B cell (primary cell): ENCODE measurements at regions of chr6 and their contacts with region 1.

Region 1: DNA sequence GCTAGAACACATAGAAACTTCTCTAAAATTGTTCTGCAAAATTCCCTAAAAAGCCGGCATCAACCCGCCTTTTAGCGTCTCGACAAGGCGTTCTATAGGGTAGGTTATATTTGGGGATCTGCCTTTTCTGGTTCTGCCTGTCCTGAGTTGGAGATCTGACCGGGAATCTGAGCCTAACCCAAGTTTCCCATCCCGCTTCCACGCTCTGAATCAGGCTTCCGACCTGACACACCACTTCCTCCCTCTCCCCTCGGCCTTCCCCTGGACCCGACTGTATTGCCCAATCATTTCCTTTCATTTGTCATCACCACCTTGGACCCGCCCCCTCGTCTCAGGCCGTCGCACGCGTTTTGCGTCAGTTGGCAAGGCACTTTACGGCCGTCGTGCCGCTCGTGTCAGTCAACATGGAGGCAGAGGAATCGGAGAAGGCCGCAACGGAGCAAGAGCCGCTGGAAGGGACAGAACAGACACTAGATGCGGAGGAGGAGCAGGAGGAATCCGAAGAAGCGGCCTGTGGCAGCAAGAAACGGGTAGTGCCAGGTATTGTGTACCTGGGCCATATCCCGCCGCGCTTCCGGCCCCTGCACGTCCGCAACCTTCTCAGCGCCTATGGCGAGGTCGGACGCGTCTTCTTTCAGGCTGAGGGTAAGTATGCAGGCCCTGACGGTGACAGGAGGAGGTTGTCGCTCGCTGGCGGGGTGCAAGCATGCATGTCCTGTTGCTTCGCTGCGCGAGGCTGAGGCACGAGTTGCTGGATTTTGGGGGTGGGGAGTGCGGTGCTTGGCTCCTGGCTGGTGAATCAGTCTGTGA is at the start of gene ABT1:
- DNase-seq: peak; percentile 98
- ATAC-seq: peak; percentile 93
- H3K4me3 ChIP-seq: peak within 1 kb of the TSS; percentile 84 to 99 (median 91)
- H3K4me3 Mint-ChIP-seq: no peak within 1 kb of the TSS
- H3K27ac ChIP-seq: peak within 1 kb of the TSS; percentile 88 to 89
- H3K27ac Mint-ChIP-seq: no peak within 1 kb of the TSS
- H3K4me1 ChIP-seq: peaks cover 14 to 24% of the 10 kb centered on the region in 2 donors
- H3K4me1 Mint-ChIP-seq: peaks cover 20% of the 10 kb centered on the region
- H3K27me3 ChIP-seq: peaks cover 2 to 20% (median 9%) of the 10 kb centered on the region in 4 experiments
- H3K27me3 Mint-ChIP-seq: peaks cover 8% of the 10 kb centered on the region
- CTCF ChIP-seq: no peak
- total RNA-seq, gene ABT1: 28.6 and 29.8 TPM in 2 replicates

Region 2: DNA sequence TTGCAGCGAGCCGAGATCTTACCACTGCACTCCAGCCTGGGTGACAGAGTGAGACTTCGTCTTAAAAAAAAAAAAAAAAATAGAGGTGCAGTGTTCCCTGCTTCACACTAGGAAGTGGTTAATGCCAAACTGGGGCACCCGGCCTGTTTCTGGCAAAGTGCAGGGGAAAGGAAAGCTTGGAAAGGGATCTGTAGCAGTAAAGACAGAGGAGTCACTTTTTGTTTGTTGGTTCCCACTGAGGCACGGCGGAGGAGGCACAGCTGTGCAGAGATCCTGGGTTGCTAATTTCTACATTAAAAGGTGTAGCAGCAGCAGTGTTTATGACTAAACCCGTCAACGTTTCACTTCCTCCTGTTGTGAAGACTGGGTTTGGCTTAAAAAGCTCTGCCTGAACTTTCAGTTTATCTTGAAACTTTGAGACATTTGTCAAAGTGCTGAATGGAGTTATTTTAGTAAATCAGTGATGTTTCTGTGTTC is 1192.1 kb before region 1 on chr6:
- CTCF ChIA-PET with region 1: no interaction called
- POLR2A ChIA-PET with region 1: no interaction called
- intact Hi-C with region 1: no loop called
- DNase-seq: peak; percentile 75
- ATAC-seq: peak; percentile 93
- H3K4me3 ChIP-seq: peak overlapping the region; percentile 32 to 70 (median 49)
- H3K4me3 Mint-ChIP-seq: no peak overlapping the region
- H3K27ac ChIP-seq: peak overlapping the region; percentile 70 to 71
- H3K27ac Mint-ChIP-seq: no peak overlapping the region
- H3K4me1 ChIP-seq: peaks cover 44 to 48% of the 10 kb centered on the region in 2 donors
- H3K4me1 Mint-ChIP-seq: peaks cover 18% of the 10 kb centered on the region
- H3K27me3 ChIP-seq: no peaks in the 10 kb centered on the region
- H3K27me3 Mint-ChIP-seq: no peaks in the 10 kb centered on the region
- CTCF ChIP-seq: no peak

Region 3: GRCh38 chr6:26136321-26136720 is 460.5 kb before region 1 on chr6:
- CTCF ChIA-PET with region 1: no interaction called
- POLR2A ChIA-PET with region 1: no interaction called
- intact Hi-C with region 1: no loop called
- DNase-seq: no peak
- ATAC-seq: no peak
- H3K4me3 ChIP-seq: no peak overlapping the region
- H3K4me3 Mint-ChIP-seq: no peak overlapping the region
- H3K27ac ChIP-seq: no peak overlapping the region
- H3K27ac Mint-ChIP-seq: peak overlapping the region; percentile 11
- H3K4me1 ChIP-seq: peaks cover 4 to 17% of the 10 kb centered on the region in 2 donors
- H3K4me1 Mint-ChIP-seq: peaks cover 42% of the 10 kb centered on the region
- H3K27me3 ChIP-seq: no peaks in the 10 kb centered on the region
- H3K27me3 Mint-ChIP-seq: no peaks in the 10 kb centered on the region
- CTCF ChIP-seq: no peak

Region 4: DNA sequence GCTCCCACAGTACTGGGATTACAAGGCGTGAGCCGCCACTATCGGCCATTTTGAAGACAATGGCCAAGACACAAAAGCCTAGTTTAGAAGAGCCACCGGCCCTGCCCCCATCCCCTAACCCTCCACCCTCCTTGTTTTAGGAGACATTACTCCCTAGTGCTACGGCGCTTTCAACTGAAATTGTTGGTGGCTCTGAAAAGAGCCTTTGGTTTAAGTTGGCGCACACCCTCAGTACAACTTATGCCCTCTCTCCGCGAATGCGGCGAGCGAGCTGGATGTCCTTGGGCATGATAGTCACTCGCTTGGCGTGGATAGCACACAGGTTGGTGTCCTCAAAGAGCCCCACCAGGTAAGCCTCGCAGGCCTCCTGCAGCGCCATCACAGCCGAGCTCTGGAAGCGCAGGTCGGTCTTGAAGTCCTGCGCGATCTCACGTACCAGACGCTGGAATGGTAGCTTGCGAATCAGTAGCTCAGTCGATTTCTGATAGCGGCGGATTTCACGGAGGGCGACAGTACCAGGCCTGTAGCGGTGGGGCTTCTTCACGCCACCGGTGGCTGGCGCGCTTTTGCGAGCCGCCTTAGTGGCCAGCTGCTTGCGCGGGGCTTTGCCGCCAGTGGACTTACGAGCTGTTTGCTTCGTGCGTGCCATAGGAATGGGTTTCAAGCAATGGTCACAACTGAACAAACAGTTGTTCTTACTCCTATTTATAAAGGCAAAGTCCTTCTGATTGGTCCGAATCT is 346.7 kb before region 1 on chr6:
- CTCF ChIA-PET with region 1: interaction called, 11 read pairs
- POLR2A ChIA-PET with region 1: no interaction called
- intact Hi-C with region 1: no loop called
- DNase-seq: peak; percentile 88
- ATAC-seq: peak; percentile 67
- H3K4me3 ChIP-seq: peak overlapping the region; percentile 68 to 90 (median 83)
- H3K4me3 Mint-ChIP-seq: peak overlapping the region; percentile 97
- H3K27ac ChIP-seq: peak overlapping the region; percentile 73 to 74
- H3K27ac Mint-ChIP-seq: peak overlapping the region; percentile 97
- H3K4me1 ChIP-seq: peaks cover 8 to 16% of the 10 kb centered on the region in 2 donors
- H3K4me1 Mint-ChIP-seq: peaks cover 43% of the 10 kb centered on the region
- H3K27me3 ChIP-seq: no peaks in the 10 kb centered on the region
- H3K27me3 Mint-ChIP-seq: no peaks in the 10 kb centered on the region
- CTCF ChIP-seq: peak; percentile 70

Region 5: GRCh38 chr6:26342106-26343004 is 254.4 kb before region 1 on chr6:
- CTCF ChIA-PET with region 1: interaction called, 30 read pairs
- POLR2A ChIA-PET with region 1: no interaction called
- intact Hi-C with region 1: loop called (anchors 1 kb)
- DNase-seq: no peak
- ATAC-seq: peak; percentile 9
- H3K4me3 ChIP-seq: peak overlapping the region in 1 of 5 experiments; percentile 19
- H3K4me3 Mint-ChIP-seq: peak overlapping the region; percentile 52
- H3K27ac ChIP-seq: no peak overlapping the region
- H3K27ac Mint-ChIP-seq: no peak overlapping the region
- H3K4me1 ChIP-seq: peaks cover 9 to 13% of the 10 kb centered on the region in 2 donors
- H3K4me1 Mint-ChIP-seq: peaks cover 8% of the 10 kb centered on the region
- H3K27me3 ChIP-seq: peaks cover 0 to 33% (median 25%) of the 10 kb centered on the region in 4 experiments
- H3K27me3 Mint-ChIP-seq: peaks cover 47% of the 10 kb centered on the region
- CTCF ChIP-seq: no peak

Region 6: DNA sequence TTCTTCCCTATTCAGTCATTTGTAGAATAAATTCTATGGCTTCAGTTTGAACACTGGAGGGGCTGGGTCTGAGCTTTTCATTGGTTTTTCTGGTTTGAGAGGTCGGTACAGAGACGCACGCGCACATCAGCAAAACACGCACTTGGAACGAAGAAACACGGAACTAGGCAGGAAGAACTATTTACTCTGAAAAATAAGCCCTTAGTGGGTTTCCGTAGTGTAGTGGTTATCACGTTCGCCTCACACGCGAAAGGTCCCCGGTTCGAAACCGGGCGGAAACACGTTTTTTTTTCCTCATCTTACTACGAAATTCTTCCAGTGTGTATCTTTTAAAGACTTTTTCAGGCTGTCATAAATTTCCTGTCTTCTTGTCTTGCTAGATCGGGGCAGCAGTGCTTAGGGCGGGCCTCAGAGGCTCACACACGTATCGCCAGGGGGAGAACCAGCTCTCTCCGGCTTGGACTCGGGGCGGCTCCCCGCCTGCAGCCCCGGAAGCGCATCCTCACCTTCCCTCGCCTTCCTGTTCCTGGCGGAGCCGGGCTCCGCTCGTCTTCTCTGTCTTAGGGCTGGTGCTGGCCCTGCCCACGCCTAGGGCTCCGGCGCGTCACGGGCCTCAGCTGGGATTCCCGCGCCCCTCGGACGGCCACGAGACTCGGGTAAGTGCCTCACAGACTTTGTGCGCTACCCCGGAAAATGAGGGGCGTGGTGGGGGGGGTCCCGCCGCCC is 58.8 kb before region 1 on chr6 and contains the start of gene HMGN4:
- CTCF ChIA-PET with region 1: interaction called, 4 read pairs
- POLR2A ChIA-PET with region 1: interaction called, 3 read pairs
- intact Hi-C with region 1: loop called (anchors 2 kb)
- DNase-seq: peak; percentile 97
- ATAC-seq: peak; percentile 68
- H3K4me3 ChIP-seq: peak within 1 kb of the TSS; percentile 89 to 98 (median 92)
- H3K4me3 Mint-ChIP-seq: peak within 1 kb of the TSS; percentile 96
- H3K27ac ChIP-seq: peak within 1 kb of the TSS; percentile 84 to 94
- H3K27ac Mint-ChIP-seq: peak within 1 kb of the TSS; percentile 99
- H3K4me1 ChIP-seq: peaks cover 29 to 35% of the 10 kb centered on the region in 2 donors
- H3K4me1 Mint-ChIP-seq: peaks cover 56% of the 10 kb centered on the region
- H3K27me3 ChIP-seq: no peaks in the 10 kb centered on the region
- H3K27me3 Mint-ChIP-seq: peaks cover 3% of the 10 kb centered on the region
- CTCF ChIP-seq: peak; percentile 8
- total RNA-seq, gene HMGN4: 81.1 and 82.4 TPM in 2 replicates

Region 7: GRCh38 chr6:26629359-26629758 is 32.6 kb after region 1 on chr6:
- CTCF ChIA-PET with region 1: no interaction called
- POLR2A ChIA-PET with region 1: no interaction called
- intact Hi-C with region 1: no loop called
- DNase-seq: no peak
- ATAC-seq: no peak
- H3K4me3 ChIP-seq: no peak overlapping the region
- H3K4me3 Mint-ChIP-seq: no peak overlapping the region
- H3K27ac ChIP-seq: no peak overlapping the region
- H3K27ac Mint-ChIP-seq: no peak overlapping the region
- H3K4me1 ChIP-seq: no peaks in the 10 kb centered on the region
- H3K4me1 Mint-ChIP-seq: no peaks in the 10 kb centered on the region
- H3K27me3 ChIP-seq: no peaks in the 10 kb centered on the region
- H3K27me3 Mint-ChIP-seq: no peaks in the 10 kb centered on the region
- CTCF ChIP-seq: no peak

Region 8: DNA sequence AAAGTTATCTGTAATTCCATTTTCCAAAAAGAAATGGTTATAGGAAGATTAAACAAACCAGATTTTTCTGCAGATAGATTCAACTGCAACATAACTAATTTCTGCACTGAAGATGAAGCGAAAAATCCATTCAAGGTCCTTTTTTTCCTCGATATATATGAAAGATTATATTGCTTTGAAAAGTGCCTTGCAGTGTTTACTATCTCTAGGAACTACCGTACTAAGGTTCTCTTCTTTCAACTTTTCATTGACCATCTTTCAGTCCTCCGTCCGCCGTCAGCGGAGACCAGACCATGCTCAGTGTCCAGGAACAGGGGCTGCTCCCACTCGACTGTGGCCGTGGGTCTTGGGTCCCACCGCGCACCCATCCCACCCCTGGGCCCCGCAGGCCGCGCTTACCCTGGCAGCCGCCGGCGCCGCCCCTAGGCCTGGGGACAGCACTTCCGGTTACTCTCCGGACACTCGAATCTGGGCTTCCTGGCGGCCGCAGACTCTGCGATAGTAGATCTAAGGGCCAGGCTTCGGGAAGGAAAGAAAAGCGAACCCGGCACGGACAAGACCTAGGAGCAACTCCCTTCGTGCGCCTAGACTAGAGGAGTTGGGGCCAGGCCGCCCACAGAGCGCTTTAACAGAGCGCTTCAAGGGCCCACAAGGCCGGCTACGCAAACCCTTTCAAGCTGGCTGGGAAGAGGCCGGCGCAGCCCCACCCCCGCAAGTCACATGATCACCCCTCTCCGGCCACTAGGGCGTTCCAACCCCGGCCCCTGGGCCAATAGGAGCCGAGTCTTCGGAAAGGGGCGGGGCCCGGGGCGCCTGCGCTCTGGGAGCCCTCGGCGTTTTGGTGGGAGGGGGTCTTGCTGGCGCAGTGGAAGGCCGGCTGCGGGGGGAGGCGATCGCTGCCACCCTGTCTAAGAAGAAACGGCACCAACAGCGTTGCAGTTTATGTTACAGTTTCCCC is 62.5 kb after region 1 on chr6 and contains the start of gene ZNF322:
- CTCF ChIA-PET with region 1: interaction called, 4 read pairs
- POLR2A ChIA-PET with region 1: no interaction called
- intact Hi-C with region 1: loop called (anchors 1 kb)
- DNase-seq: peak; percentile 92
- ATAC-seq: peak; percentile 99
- H3K4me3 ChIP-seq: peak within 1 kb of the TSS; percentile 80 to 94 (median 81)
- H3K4me3 Mint-ChIP-seq: peak within 1 kb of the TSS; percentile 88
- H3K27ac ChIP-seq: peak within 1 kb of the TSS; percentile 51 to 87
- H3K27ac Mint-ChIP-seq: peak within 1 kb of the TSS; percentile 28
- H3K4me1 ChIP-seq: peaks cover 21 to 23% of the 10 kb centered on the region in 2 donors
- H3K4me1 Mint-ChIP-seq: peaks cover 31% of the 10 kb centered on the region
- H3K27me3 ChIP-seq: peaks cover 0 to 6% (median 4%) of the 10 kb centered on the region in 4 experiments
- H3K27me3 Mint-ChIP-seq: peaks cover 25% of the 10 kb centered on the region
- CTCF ChIP-seq: no peak
- total RNA-seq, gene ZNF322: 23.5 and 27.6 TPM in 2 replicates

Region 9: DNA sequence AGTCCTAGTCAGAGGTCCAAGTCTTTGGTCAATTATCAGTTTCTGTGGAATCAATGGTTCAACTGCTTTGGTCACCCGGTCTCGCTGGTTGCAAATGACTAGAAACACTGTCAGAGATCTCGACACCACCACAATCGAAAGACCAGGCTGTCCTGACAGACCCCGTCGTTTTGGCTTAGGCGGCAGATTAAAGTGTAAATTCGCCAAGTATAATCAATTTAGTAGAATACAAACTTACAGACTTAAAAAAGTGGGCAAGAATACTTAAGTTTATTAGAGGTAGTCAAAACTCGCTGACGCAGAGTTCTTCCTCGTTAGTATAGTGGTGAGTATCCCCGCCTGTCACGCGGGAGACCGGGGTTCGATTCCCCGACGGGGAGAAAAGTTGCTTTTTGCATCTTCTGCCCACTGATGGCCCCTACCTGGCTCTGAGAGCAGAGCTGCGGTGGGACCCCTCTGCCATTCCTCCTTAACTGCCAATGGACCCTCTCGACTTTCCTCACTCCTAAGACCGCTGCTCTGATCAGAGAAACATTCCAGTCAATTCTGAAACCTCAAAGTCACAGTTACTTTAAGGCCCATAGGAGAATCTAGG is 906.7 kb after region 1 on chr6:
- CTCF ChIA-PET with region 1: no interaction called
- POLR2A ChIA-PET with region 1: no interaction called
- intact Hi-C with region 1: loop called (anchors 10 kb)
- DNase-seq: peak; percentile 89
- ATAC-seq: peak; percentile 44
- H3K4me3 ChIP-seq: peak overlapping the region; percentile 48 to 82 (median 74)
- H3K4me3 Mint-ChIP-seq: peak overlapping the region; percentile 85
- H3K27ac ChIP-seq: peak overlapping the region in 1 of 2 donors; percentile 64
- H3K27ac Mint-ChIP-seq: peak overlapping the region; percentile 81
- H3K4me1 ChIP-seq: peaks cover 9 to 24% of the 10 kb centered on the region in 2 donors
- H3K4me1 Mint-ChIP-seq: peaks cover 38% of the 10 kb centered on the region
- H3K27me3 ChIP-seq: peaks cover 0 to 4% (median 1%) of the 10 kb centered on the region in 4 experiments
- H3K27me3 Mint-ChIP-seq: peaks cover 9% of the 10 kb centered on the region
- CTCF ChIP-seq: no peak